ENCODE measurements at regions of chr3 and their contacts with region 1.

Region 1: DNA sequence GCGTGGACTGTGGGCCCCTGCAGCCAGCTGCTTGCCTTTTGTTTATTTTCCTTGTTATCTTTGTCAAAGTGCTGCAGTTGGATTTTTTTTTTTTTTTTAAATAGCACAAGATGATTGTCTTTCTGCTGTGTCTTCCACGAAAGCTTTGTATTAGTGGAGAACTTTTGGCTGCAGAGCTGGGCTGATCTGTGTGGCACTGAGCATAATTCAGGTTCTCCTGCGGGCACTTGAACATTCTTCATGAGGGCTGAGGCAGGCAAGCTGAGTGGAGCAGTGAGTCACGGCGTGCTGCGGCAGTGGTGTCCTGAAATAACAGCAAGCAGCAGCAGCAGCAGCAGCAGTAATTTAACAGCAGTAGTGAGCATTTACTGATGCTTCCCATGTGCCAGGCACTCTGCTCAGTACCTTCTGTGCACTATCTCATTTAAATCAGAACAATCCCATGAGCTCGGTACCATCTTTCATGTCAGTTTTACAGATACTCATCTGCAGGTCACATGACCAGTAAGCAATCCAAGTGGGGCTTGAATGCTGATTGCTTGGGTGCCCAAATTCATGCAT is 45.8 kb downstream of the MITF start:
- DNase-seq: peak in 1 of 2 experiments; percentile 67
- H3K4me3 ChIP-seq: no peak overlapping the region
- H3K27ac ChIP-seq: no peak overlapping the region
- H3K4me1 ChIP-seq: peaks cover 12% of the 10 kb centered on the region
- H3K27me3 ChIP-seq: no peaks in the 10 kb centered on the region
- CTCF ChIP-seq: no peak

Region 2: GRCh38 chr3:69739204-69740102 is 45.6 kb before region 1 on chr3 and contains the start of gene MITF:
- CTCF ChIA-PET with region 1: no interaction called
- POLR2A ChIA-PET with region 1: interaction called, 5 read pairs
- intact Hi-C with region 1: loop called (anchors 1 kb)
- DNase-seq: peak; percentile 75 to 88
- H3K4me3 ChIP-seq: peak within 1 kb of the TSS; percentile 83
- H3K27ac ChIP-seq: no peak within 1 kb of the TSS
- H3K4me1 ChIP-seq: peaks cover 18% of the 10 kb centered on the region; the same call in 1 of the 2 replicates
- H3K27me3 ChIP-seq: no peaks in the 10 kb centered on the region
- CTCF ChIP-seq: no peak
- total RNA-seq, gene MITF: 15.5 and 17.2 TPM in 2 replicates

Region 3: DNA sequence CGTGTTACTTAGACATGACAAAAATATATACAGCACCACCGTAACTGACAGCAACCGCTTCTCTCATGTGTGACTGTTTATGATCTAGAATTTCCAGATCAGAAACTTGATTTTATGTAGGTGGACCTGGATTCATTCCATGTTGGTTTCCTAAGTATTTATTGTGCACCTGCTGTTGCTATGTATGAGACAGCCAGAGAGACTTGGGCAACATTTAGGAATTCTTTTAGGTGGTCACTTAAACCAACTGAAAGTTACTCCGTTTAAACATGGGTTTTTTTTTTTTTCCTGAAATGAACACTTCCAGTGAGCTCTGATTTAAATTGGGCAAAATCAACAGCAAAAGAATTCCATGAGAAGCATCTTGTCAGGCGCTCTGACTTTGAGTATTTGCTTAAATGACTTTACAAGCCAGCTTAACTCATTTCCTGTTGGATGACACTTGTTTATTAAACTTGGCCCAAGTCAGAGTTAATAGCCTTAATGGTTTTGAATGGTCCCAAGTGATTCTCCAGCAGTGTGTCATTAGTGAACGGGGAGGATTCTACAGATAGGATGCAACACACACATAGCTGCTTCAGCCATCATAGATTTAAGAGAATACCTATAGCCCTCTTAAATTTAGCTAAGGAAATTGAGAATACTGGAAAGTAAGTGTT is 13.9 kb before region 1 on chr3:
- CTCF ChIA-PET with region 1: interaction called, 4 read pairs
- POLR2A ChIA-PET with region 1: no interaction called
- intact Hi-C with region 1: loop called (anchors 1 kb)
- DNase-seq: peak in 1 of 2 experiments; percentile 86
- H3K4me3 ChIP-seq: no peak overlapping the region
- H3K27ac ChIP-seq: peak overlapping the region; percentile 87
- H3K4me1 ChIP-seq: peaks cover 44% of the 10 kb centered on the region
- H3K27me3 ChIP-seq: no peaks in the 10 kb centered on the region
- CTCF ChIP-seq: no peak

Region 4: DNA sequence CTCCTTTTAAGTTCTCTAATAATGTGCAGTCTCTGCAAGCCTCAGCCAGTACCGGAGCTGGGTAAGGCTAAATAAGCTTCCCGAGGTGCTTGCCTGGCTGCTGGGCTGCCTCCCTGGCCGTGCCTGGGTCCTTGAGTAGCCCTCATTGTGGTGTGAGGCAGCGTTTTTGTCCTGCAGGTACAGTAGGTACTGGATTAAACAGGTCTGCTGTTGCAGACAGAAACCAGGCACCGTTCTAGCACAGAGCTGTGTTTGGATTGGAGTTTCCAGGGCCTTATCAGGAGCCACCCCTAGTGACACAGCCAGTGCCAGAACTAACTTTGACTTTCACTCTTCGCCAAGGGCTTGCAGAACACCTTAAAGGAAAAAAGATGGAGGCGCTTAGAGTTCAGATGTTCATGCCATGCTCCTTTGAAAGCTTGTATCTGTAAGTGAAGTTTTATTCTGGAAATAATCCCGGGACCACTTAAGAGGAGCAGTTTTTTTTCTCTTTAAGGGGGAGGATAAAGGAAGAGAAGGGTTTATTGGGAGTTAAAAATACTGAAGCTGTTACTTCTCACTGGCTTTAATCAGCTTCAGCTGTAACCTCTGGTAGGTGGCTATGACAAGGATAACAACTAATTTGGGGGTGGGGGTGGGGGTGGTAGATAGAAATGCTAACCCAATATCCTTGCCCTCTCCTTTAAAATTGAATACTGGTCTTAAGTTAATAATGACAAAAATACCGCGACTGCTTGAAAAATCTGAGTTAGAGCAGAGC is 81.1 kb after region 1 on chr3:
- CTCF ChIA-PET with region 1: no interaction called
- POLR2A ChIA-PET with region 1: no interaction called
- intact Hi-C with region 1: loop called (anchors 5 kb)
- DNase-seq: peak in 1 of 2 experiments; percentile 58
- H3K4me3 ChIP-seq: no peak overlapping the region
- H3K27ac ChIP-seq: peak overlapping the region; percentile 83
- H3K4me1 ChIP-seq: peaks cover 51% of the 10 kb centered on the region
- H3K27me3 ChIP-seq: no peaks in the 10 kb centered on the region
- CTCF ChIP-seq: no peak

Measured in PC-9 (cell line).